Endothelial cell of umbilical vein (primary cell): ENCODE measurements at regions of chr14 and their contacts with region 1.

Region 1: DNA sequence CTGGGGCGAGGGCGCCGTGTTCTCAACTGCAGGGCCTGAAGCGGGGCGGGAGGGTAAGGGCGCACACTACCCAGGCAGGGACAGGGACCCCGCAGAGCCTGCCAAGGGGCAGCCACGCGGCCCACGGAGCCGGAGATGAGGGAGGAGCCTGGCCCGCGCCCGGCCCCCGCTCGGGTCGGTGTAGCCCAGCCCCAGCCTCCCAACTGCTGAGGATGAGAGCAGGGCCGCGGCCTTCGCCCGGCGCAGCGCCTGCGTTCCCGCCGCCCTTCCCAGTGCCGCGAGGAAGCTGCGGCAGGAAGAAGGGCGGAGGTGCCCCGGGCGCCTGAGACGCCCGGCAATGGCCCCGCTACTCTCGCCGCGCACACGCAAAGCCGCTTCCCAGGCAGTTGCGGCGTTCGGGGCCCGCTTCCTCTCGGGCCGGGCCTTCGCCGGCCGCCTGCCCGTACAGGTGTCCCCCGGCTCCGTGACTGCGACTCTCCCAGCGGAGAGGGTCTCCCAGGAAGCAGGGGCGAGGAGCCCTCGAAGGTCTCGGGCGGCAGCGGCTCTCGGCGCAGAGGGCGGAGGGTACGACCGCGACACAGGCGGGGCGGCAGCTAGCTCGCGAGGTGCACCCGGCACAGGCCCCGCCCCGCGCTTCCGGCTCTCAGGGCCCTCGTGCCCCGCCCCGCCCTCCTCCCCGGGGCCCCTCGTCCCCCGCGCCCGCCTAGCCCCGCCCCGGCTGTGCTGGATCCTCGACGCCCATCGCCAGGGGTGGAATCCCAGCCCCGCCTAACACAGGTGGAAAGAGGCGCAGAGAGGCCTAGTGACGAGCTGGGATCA is 24.8 kb upstream of the YY1 start:
- DNase-seq: peak; percentile 45
- H3K4me3 ChIP-seq: peak overlapping the region; percentile 28 to 59 (median 36)
- H3K27ac ChIP-seq: peak overlapping the region; percentile 8
- H3K4me1 ChIP-seq: no peaks in the 10 kb centered on the region
- H3K27me3 ChIP-seq: no peaks in the 10 kb centered on the region
- CTCF ChIP-seq: no peak
- POLR2A ChIP-seq: peak; percentile 40

Region 2: GRCh38 chr14:100155042-100155846 is 58.9 kb before region 1 on chr14:
- CTCF ChIA-PET with region 1: no interaction called
- POLR2A ChIA-PET with region 1: no interaction called
- dilution Hi-C with region 1: no loop called
- intact Hi-C with region 1: loop called (anchors 2 kb)
- DNase-seq: peak; percentile 20
- H3K4me3 ChIP-seq: no peak overlapping the region
- H3K27ac ChIP-seq: no peak overlapping the region
- H3K4me1 ChIP-seq: no peaks in the 10 kb centered on the region
- H3K27me3 ChIP-seq: peaks cover 7 to 12% of the 10 kb centered on the region in 2 experiments
- CTCF ChIP-seq: peak; percentile 49 to 63
- POLR2A ChIP-seq: no peak